ENCODE measurements at regions of chr9 and their contacts with region 1.

Region 1: GRCh38 chr9:109537288-109537687 is 39.2 kb upstream of the PTPN3 start:
- DNase-seq: no peak
- ATAC-seq: no peak
- H3K4me3 ChIP-seq: no peak overlapping the region
- H3K27ac ChIP-seq: no peak overlapping the region
- H3K4me1 ChIP-seq: no peaks in the 10 kb centered on the region
- H3K27me3 ChIP-seq: no peaks in the 10 kb centered on the region
- CTCF ChIP-seq: no peak

Region 2: DNA sequence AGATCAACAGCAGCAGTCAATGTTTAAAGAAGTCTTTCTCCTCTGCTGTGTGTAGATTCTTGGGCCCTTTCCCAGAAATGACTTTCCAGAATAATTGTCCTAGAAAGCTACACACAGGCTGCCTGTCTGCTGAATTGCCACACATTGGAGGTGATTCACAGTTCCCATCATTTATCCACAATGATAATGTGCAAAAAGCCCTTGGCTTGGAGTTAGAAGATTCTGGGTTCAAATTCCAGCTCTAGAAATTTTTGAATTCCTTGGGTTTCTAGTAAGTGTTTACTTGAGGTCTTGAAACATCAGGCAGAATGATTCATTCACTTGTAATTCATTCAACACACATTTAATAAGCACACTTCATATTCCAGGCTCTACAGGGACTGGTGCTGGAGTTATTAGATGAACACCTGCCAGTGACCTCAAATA is 187.9 kb before region 1 on chr9:
- CTCF ChIA-PET with region 1: no interaction called
- POLR2A ChIA-PET with region 1: interaction called, 15 read pairs
- intact Hi-C with region 1: no loop called
- DNase-seq: peak; percentile 77
- ATAC-seq: peak; percentile 77
- H3K4me3 ChIP-seq: no peak overlapping the region
- H3K27ac ChIP-seq: no peak overlapping the region
- H3K4me1 ChIP-seq: peaks cover 23% of the 10 kb centered on the region
- H3K27me3 ChIP-seq: no peaks in the 10 kb centered on the region
- CTCF ChIP-seq: no peak